CD4-positive, alpha-beta T cell (primary cell): ENCODE measurements at regions of chr11 and their contacts with region 1.

Region 1: GRCh38 chr11:129785383-129786111 is 30.1 kb upstream of the TMEM45B start:
- DNase-seq: peak in 3 of 14 experiments; percentile 7 to 43 (median 29)
- ATAC-seq: no peak
- H3K4me3 ChIP-seq: no peak overlapping the region
- H3K4me3 Mint-ChIP-seq: no peak overlapping the region
- H3K27ac ChIP-seq: no peak overlapping the region
- H3K27ac Mint-ChIP-seq: no peak overlapping the region
- H3K4me1 ChIP-seq: peaks cover 4% of the 10 kb centered on the region
- H3K4me1 Mint-ChIP-seq: peaks cover 8% of the 10 kb centered on the region
- H3K27me3 ChIP-seq: no peaks in the 10 kb centered on the region
- H3K27me3 Mint-ChIP-seq: no peaks in the 10 kb centered on the region
- CTCF ChIP-seq: peak; percentile 67

Region 2: DNA sequence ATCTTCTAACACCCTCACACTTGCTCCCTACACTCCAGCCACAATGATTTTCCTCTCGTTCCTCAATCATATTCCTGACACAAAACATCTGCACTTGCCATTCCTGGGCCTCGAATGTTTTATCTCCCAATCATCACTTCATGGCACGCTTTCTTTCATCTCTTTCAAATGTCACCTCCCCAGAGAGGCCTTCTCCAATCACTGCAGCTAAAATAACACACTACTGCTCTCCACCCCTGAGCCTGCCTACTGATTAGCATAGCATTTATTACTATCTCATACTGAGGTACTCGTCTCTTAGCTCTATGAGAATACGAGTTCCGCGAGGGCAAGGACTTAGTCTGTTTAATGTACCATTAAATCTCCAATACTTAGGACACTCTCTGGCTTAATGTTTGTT is 86.4 kb after region 1 on chr11:
- CTCF ChIA-PET with region 1: no interaction called
- POLR2A ChIA-PET with region 1: interaction called, 3 read pairs
- intact Hi-C with region 1: loop called in 1 of 2 experiments (anchors 5 kb)
- DNase-seq: no peak
- ATAC-seq: no peak
- H3K4me3 ChIP-seq: no peak overlapping the region
- H3K4me3 Mint-ChIP-seq: no peak overlapping the region
- H3K27ac ChIP-seq: no peak overlapping the region
- H3K27ac Mint-ChIP-seq: no peak overlapping the region
- H3K4me1 ChIP-seq: peaks cover under 1% of the 10 kb centered on the region
- H3K4me1 Mint-ChIP-seq: peaks cover 10% of the 10 kb centered on the region
- H3K27me3 ChIP-seq: no peaks in the 10 kb centered on the region
- H3K27me3 Mint-ChIP-seq: no peaks in the 10 kb centered on the region
- CTCF ChIP-seq: no peak